ENCODE measurements at regions of chr13 and their contacts with region 1.

Region 1: GRCh38 chr13:110250258-110250891 is 56.6 kb downstream of the COL4A1 start:
- DNase-seq: no peak
- H3K4me3 ChIP-seq: no peak overlapping the region
- H3K27ac ChIP-seq: peak overlapping the region; percentile 62 to 65
- H3K4me1 ChIP-seq: no peaks in the 10 kb centered on the region
- H3K27me3 ChIP-seq: no peaks in the 10 kb centered on the region
- CTCF ChIP-seq: no peak
- POLR2A ChIP-seq: no peak

Region 2: DNA sequence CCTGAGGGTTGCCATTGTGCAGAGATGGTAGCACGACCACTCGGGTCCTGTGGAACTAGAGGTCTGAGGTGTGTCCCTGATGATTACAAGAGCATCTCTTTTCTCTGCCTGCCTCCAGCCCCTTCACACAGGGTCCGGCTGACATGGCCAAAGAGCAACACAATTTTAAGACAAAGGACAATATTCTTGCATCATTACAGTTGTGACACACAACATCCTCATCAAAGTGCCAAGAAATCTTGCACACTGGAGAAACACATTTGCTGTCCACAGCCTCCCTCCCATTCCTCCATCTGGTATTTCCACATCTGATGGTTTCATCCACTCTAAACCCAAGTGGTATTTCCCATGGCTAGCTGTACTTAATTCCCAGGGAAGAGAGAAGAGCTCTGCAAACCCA is 43.8 kb after region 1 on chr13:
- intact Hi-C with region 1: loop called (anchors 5 kb)
- DNase-seq: no peak
- H3K4me3 ChIP-seq: no peak overlapping the region
- H3K27ac ChIP-seq: peak overlapping the region in 1 of 2 donors; percentile 28
- H3K4me1 ChIP-seq: no peaks in the 10 kb centered on the region
- H3K27me3 ChIP-seq: no peaks in the 10 kb centered on the region
- CTCF ChIP-seq: no peak
- POLR2A ChIP-seq: no peak

Measured in prostate gland (tissue), 2 donors.